ENCODE measurements at regions of chr6 and their contacts with region 1.

Region 1: GRCh38 chr6:73129653-73130443 is 95.4 kb downstream of the KHDC1L start:
- DNase-seq: peak; percentile 17
- H3K4me3 ChIP-seq: no peak overlapping the region
- H3K27me3 ChIP-seq: no peaks in the 10 kb centered on the region
- CTCF ChIP-seq: peak; percentile 97

Region 2: DNA sequence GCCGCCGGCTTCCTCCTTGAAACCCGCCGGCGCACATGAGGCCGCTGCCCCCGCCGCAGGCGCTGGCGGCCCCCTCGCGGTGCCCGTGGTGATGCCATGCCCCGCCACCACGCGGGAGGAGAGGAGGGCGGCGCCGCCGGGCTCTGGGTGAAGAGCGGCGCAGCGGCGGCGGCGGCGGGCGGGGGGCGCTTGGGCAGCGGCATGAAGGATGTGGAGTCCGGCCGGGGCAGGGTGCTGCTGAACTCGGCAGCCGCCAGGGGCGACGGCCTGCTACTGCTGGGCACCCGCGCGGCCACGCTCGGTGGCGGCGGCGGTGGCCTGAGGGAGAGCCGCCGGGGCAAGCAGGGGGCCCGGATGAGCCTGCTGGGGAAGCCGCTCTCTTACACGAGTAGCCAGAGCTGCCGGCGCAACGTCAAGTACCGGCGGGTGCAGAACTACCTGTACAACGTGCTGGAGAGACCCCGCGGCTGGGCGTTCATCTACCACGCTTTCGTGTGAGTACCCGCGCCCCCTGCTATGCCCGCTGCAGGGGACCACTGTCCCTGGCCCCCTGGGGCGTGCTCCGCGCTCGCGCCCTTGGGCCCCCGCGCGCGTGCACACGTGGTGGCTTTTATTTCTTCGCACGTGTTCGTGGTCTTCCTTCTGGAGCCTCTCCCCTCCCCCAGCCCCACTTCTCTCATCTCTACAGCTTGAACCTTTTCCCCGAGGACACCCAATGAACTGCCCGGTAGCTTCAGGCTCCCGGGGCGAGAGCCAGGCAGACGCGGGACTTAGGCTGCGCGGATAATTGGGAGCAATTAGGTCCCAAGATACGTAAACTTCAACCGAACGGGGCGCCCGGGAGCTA is 507.5 kb before region 1 on chr6:
- CTCF ChIA-PET with region 1: interaction called, 117 read pairs
- POLR2A ChIA-PET with region 1: no interaction called
- DNase-seq: no peak
- H3K4me3 ChIP-seq: peak overlapping the region; percentile 66
- H3K27me3 ChIP-seq: no peaks in the 10 kb centered on the region
- CTCF ChIP-seq: peak; percentile 34; the same call in 1 of the 2 replicates

Region 3: GRCh38 chr6:73248192-73248903 is 118.5 kb after region 1 on chr6:
- CTCF ChIA-PET with region 1: no interaction called
- POLR2A ChIA-PET with region 1: no interaction called
- DNase-seq: no peak
- H3K4me3 ChIP-seq: no peak overlapping the region
- H3K27me3 ChIP-seq: no peaks in the 10 kb centered on the region
- CTCF ChIP-seq: no peak